ENCODE measurements at regions of chr12 and their contacts with region 1.

Region 1: DNA sequence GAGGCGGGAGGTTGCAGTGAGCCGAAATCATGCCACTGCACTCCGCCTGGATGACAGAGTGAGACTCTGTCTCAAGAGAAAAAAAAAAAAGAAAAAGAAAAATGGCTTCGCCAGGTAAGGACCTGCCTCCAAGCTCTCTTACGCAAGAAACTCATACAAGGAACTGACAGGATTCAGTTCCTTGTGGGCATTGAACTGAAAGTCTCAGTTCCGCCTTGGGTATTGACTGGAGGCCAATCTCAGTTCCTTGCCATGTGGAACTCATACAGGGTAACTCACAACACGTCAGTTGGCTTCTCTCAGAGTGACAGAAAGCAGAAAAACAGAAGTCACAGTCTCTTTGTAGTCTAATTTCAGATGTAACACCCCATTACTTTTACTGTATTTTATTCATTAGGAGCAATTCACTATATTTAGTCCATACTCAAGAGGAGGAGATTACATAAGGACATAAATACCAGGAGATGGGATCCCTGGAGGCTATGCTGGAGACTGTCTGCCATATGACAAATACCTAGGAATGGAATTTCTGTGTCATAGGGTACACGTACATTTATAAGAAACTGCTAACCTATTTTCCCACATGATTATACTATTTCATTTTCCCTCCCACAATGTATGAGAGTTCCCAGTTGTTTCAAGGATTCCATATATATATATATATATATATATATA is 11.4 kb upstream of the NOPCHAP1 start:
- DNase-seq: peak; percentile 92
- ATAC-seq: peak; percentile 99
- H3K4me3 ChIP-seq: peak overlapping the region in 1 of 5 experiments; percentile 7
- H3K4me3 Mint-ChIP-seq: peak overlapping the region; percentile 69
- H3K27ac ChIP-seq: peak overlapping the region; percentile 71 to 76
- H3K27ac Mint-ChIP-seq: peak overlapping the region; percentile 76
- H3K4me1 ChIP-seq: peaks cover 24 to 32% of the 10 kb centered on the region in 2 donors
- H3K4me1 Mint-ChIP-seq: peaks cover 30% of the 10 kb centered on the region
- H3K27me3 ChIP-seq: no peaks in the 10 kb centered on the region
- H3K27me3 Mint-ChIP-seq: no peaks in the 10 kb centered on the region
- CTCF ChIP-seq: no peak

Region 2: GRCh38 chr12:104986022-104986941 is 11.5 kb after region 1 on chr12 and contains the start of gene NOPCHAP1:
- CTCF ChIA-PET with region 1: interaction called, 5 read pairs
- POLR2A ChIA-PET with region 1: no interaction called
- intact Hi-C with region 1: loop called (anchors 1 kb)
- DNase-seq: peak; percentile 86
- ATAC-seq: peak; percentile 99
- H3K4me3 ChIP-seq: peak within 1 kb of the TSS; percentile 57 to 93 (median 78)
- H3K4me3 Mint-ChIP-seq: peak within 1 kb of the TSS; percentile 87
- H3K27ac ChIP-seq: peak within 1 kb of the TSS; percentile 14 to 60
- H3K27ac Mint-ChIP-seq: peak within 1 kb of the TSS; percentile 68
- H3K4me1 ChIP-seq: peaks cover 17 to 18% of the 10 kb centered on the region in 2 donors
- H3K4me1 Mint-ChIP-seq: peaks cover 27% of the 10 kb centered on the region
- H3K27me3 ChIP-seq: no peaks in the 10 kb centered on the region
- H3K27me3 Mint-ChIP-seq: no peaks in the 10 kb centered on the region
- CTCF ChIP-seq: no peak
- total RNA-seq, gene NOPCHAP1: 15.3 and 21.2 TPM in 2 replicates